Caco-2 (cell line): ENCODE measurements at regions of chr2 and their contacts with region 1.

Region 1: DNA sequence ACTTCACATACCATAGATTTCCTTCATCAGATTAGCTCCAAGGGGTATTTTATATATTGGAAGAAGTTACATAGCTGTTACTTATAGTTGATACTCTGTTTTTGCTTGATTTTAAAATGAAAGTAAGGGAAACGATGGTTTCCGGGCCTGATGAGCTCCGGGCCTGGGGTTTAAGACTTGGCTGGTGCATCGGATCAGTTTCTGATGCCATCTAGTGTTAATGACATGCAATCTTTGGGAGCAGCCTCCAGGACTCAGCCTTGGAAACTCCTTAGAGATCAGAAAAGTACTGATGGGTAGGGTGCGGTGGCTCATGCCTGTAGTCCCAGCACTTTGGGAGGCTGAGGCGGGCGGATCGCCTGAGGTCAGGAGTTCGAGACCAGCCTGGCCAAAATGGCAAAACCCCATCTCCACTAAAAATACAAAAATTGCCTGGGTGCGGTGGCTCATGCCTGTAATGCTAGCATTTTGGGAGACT is 47.1 kb upstream of the CNOT11 start:
- DNase-seq: peak; percentile 68
- H3K4me3 ChIP-seq: no peak overlapping the region
- H3K4me3 Mint-ChIP-seq: no peak overlapping the region
- H3K27ac Mint-ChIP-seq: no peak overlapping the region
- H3K4me1 ChIP-seq: peaks cover 25% of the 10 kb centered on the region
- H3K4me1 Mint-ChIP-seq: peaks cover 17% of the 10 kb centered on the region
- H3K27me3 ChIP-seq: no peaks in the 10 kb centered on the region
- H3K27me3 Mint-ChIP-seq: no peaks in the 10 kb centered on the region
- CTCF ChIP-seq: peak; percentile 35 to 71

Region 2: GRCh38 chr2:101012706-101013181 is 192.8 kb before region 1 on chr2:
- CTCF ChIA-PET with region 1: interaction called, 14 read pairs
- POLR2A ChIA-PET with region 1: no interaction called
- intact Hi-C with region 1: loop called (anchors 1 kb)
- DNase-seq: peak in 1 of 2 experiments; percentile 62
- H3K4me3 ChIP-seq: no peak overlapping the region
- H3K4me3 Mint-ChIP-seq: no peak overlapping the region
- H3K27ac Mint-ChIP-seq: peak overlapping the region; percentile 22
- H3K4me1 ChIP-seq: no peaks in the 10 kb centered on the region
- H3K4me1 Mint-ChIP-seq: peaks cover 11% of the 10 kb centered on the region
- H3K27me3 ChIP-seq: no peaks in the 10 kb centered on the region
- H3K27me3 Mint-ChIP-seq: no peaks in the 10 kb centered on the region
- CTCF ChIP-seq: peak; percentile 67 to 85

Region 3: GRCh38 chr2:101036562-101037457 is 168.8 kb before region 1 on chr2:
- CTCF ChIA-PET with region 1: interaction called, 17 read pairs
- POLR2A ChIA-PET with region 1: no interaction called
- intact Hi-C with region 1: loop called (anchors 1 kb)
- DNase-seq: peak in 1 of 2 experiments; percentile 29
- H3K4me3 ChIP-seq: no peak overlapping the region
- H3K4me3 Mint-ChIP-seq: no peak overlapping the region
- H3K27ac Mint-ChIP-seq: peak overlapping the region; percentile 6
- H3K4me1 ChIP-seq: no peaks in the 10 kb centered on the region
- H3K4me1 Mint-ChIP-seq: peaks cover 7% of the 10 kb centered on the region
- H3K27me3 ChIP-seq: no peaks in the 10 kb centered on the region
- H3K27me3 Mint-ChIP-seq: no peaks in the 10 kb centered on the region
- CTCF ChIP-seq: peak; percentile 46 to 67

Region 4: DNA sequence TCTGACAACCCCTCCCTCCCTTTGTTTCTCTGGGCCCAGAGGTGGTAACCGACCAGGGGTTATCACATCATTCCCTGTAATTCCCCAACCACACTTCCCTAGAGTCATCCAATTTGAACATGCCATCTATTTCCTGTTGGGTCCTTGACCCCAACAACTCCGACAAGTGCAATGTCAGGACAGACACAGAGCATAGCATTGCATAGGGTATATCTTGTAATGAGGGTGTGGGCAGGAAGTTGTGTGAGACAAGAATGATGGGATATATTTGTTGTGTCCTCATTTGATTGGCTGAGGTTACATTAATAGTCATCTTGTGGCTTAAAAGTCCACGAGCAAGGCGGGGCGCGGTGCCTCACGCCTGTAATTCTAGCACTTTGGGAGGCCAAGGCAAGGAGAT is 13.7 kb after region 1 on chr2:
- CTCF ChIA-PET with region 1: interaction called, 12 read pairs
- POLR2A ChIA-PET with region 1: no interaction called
- intact Hi-C with region 1: no loop called
- DNase-seq: no peak
- H3K4me3 ChIP-seq: no peak overlapping the region
- H3K4me3 Mint-ChIP-seq: no peak overlapping the region
- H3K27ac Mint-ChIP-seq: no peak overlapping the region
- H3K4me1 ChIP-seq: no peaks in the 10 kb centered on the region; the same call in 1 of the 2 replicates
- H3K4me1 Mint-ChIP-seq: peaks cover 5% of the 10 kb centered on the region
- H3K27me3 ChIP-seq: no peaks in the 10 kb centered on the region
- H3K27me3 Mint-ChIP-seq: no peaks in the 10 kb centered on the region
- CTCF ChIP-seq: no peak

Region 5: GRCh38 chr2:101238930-101239759 is 33.6 kb after region 1 on chr2:
- CTCF ChIA-PET with region 1: interaction called, 5 read pairs
- POLR2A ChIA-PET with region 1: no interaction called
- intact Hi-C with region 1: loop called (anchors 1 kb)
- DNase-seq: peak; percentile 88
- H3K4me3 ChIP-seq: peak overlapping the region; percentile 24
- H3K4me3 Mint-ChIP-seq: peak overlapping the region; percentile 80
- H3K27ac Mint-ChIP-seq: peak overlapping the region; percentile 98
- H3K4me1 ChIP-seq: peaks cover 58% of the 10 kb centered on the region
- H3K4me1 Mint-ChIP-seq: peaks cover 50% of the 10 kb centered on the region
- H3K27me3 ChIP-seq: no peaks in the 10 kb centered on the region
- H3K27me3 Mint-ChIP-seq: no peaks in the 10 kb centered on the region
- CTCF ChIP-seq: no peak